PC-9 (cell line): ENCODE measurements at regions of chr4 and their contacts with region 1.

Region 1: DNA sequence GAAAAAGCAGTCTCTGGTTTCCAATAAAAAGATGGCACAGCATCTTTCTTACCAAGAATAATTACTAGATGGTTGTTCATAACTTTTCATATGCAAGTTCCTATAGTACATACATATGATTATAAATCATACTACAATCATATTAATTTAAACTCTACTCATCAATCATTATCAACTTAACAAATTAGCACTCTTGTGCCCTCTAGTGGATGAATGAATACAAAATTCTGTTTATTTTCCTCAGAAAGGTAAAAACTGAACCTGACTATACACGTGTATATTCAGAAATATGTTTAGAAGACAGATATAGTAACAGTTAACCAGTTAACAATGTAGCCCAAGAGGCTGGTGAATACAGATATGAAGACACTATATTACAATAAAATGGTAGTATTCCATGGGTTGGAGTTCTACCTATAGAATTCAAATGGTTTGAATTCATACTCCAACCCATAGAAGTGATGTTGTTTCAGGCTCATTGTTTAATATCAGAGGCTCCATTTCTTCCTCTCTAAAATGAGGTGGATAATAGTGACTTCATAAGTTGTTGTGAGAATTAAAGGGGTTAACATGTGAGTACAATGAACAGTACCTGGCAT is 100.0 kb downstream of the ADAMTS3 start:
- DNase-seq: no peak
- H3K4me3 ChIP-seq: no peak overlapping the region
- H3K27ac ChIP-seq: no peak overlapping the region
- H3K4me1 ChIP-seq: no peaks in the 10 kb centered on the region
- H3K27me3 ChIP-seq: no peaks in the 10 kb centered on the region
- CTCF ChIP-seq: peak; percentile 72

Region 2: DNA sequence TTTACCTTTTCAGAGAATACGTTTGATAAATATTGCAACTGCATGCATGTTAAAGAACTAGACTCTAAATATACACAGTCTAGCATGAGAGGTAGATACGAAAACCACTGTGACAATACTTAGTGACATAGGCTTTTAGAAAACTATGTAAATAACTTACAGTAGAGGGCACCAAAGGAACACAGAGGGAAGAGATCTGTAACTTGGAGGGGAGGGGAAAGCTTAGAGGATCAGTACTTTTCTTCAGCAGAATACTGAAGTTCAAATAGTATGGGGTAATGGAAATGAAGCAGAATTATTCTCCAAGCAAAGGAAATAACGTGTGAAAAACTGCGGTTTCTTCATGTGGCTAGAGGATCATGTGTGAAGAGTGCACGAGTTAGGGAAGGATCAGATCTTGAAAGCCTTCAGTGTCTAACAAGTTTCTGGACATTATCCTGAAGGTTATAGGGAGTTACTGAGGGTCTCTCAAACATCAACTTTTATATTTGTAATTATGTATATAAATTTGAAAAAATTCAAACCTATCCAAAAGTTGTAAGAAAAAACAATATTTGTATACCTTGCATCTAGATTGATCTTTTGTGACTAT is 172.9 kb before region 1 on chr4:
- CTCF ChIA-PET with region 1: no interaction called
- POLR2A ChIA-PET with region 1: interaction called, 3 read pairs
- intact Hi-C with region 1: loop called (anchors 5 kb)
- DNase-seq: no peak
- H3K4me3 ChIP-seq: no peak overlapping the region
- H3K27ac ChIP-seq: no peak overlapping the region
- H3K4me1 ChIP-seq: no peaks in the 10 kb centered on the region
- H3K27me3 ChIP-seq: no peaks in the 10 kb centered on the region
- CTCF ChIP-seq: peak; percentile 69

Region 3: DNA sequence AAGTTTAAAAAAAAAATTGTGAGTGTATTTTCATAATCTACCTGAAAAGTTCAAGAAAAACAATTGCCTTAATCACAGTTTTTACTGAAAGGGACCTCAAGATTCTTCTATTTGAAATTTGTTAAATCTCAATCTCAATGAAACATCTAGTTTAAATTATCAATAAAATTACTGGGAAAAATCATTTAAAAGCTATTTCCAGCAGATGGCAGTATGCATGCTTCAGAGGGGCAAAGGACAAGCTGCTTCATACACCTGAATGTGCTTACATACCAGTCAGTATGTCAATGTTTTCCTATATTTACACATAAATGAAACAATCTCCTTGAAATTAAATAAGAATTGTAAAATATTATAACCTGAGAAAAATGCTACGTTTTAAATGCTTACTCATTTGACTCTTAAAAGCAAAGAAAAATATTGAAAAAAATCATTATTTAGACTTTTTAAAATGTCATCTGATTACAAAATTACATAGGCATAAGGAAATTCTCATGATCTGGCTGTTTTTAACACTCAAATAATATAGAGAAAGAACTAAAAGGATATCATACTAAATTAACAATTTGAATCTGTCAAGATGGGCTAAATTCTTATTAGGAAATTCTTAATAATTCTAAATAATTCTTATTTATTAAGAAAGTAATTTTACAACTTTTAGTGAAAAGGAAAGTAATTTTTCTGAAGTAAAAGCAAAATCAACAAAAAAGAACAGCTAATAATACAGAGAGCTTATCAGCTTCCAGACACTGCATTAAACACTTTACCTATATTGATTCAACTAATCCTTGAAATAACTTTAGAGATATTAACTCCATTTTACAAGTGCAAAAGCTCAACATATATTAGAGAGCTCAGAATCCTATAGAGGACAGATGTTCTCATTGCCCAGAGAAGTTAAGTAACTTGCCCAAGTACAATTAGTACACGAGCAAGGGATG is 142.0 kb before region 1 on chr4:
- CTCF ChIA-PET with region 1: no interaction called
- POLR2A ChIA-PET with region 1: no interaction called
- intact Hi-C with region 1: loop called (anchors 1 kb)
- DNase-seq: no peak
- H3K4me3 ChIP-seq: no peak overlapping the region
- H3K27ac ChIP-seq: no peak overlapping the region
- H3K4me1 ChIP-seq: no peaks in the 10 kb centered on the region
- H3K27me3 ChIP-seq: no peaks in the 10 kb centered on the region
- CTCF ChIP-seq: peak; percentile 67